Aorta (tissue), 5 donors: ENCODE measurements at regions of chr17 and their contacts with region 1.

Region 1: GRCh38 chr17:38824899-38825761 is at the start of gene CWC25:
- DNase-seq: peak; percentile 94 to 98
- ATAC-seq: peak; percentile 96
- H3K4me3 ChIP-seq: peak within 1 kb of the TSS; percentile 52 to 86
- H3K27ac ChIP-seq: peak within 1 kb of the TSS; percentile 95 to 97
- H3K4me1 ChIP-seq: no peaks in the 10 kb centered on the region
- H3K27me3 ChIP-seq: no peaks in the 10 kb centered on the region
- total RNA-seq, gene CWC25: 19.0 to 23.9 TPM

Region 2: DNA sequence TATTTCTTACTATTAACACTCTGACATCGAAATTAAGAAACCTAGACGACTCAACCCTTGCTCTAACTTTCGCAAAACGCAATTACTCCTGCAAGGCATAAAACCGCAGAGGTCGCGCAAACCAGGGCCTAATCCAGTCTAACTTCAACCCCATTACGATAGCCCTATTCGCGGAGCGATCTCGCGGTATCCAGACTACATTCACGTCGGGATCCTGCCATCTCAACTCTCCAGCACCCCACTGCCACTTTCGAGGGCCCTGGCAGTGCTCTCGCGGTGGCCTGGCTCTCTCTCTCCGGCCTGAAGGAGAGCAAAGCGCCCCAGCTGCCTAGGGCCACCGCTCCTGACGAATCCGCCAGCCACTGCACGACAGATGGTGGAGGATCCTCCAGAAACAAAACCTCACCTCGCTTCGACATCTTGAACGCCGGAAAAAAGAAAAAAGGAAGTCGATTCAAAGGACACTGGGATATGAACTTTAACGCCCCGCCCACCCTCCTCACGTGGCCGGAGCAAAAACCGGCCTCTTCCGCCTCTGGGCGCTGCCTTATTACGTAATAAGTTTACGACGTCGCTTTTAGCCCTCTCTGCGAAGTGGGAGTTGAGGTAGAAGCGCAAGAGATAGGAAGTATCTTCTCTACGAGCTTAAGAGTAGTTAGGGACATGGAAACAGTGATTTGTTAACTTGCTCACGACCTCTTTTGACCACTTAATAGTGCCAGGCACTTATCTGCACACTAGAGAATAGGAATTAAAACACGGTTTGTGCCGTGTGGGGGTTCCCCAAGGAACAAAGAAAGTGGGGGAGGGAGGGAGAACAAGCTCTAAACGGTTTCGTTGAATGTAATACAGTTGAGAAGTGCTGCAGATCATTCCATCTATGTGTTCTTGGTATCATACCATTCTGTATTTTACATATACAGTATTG is 28.4 kb after region 1 on chr17 and contains the start of gene RPL23:
- intact Hi-C with region 1: loop called in 1 of 2 experiments (anchors 1 kb)
- DNase-seq: peak; percentile 96 to 97
- ATAC-seq: peak; percentile 97
- H3K4me3 ChIP-seq: peak within 1 kb of the TSS; percentile 9 to 53
- H3K27ac ChIP-seq: peak within 1 kb of the TSS; percentile 46 to 60
- H3K4me1 ChIP-seq: peaks cover 0 to 5% of the 10 kb centered on the region in 2 donors
- H3K27me3 ChIP-seq: no peaks in the 10 kb centered on the region
- total RNA-seq, gene RPL23: 1,147 to 1,150 TPM

Region 3: DNA sequence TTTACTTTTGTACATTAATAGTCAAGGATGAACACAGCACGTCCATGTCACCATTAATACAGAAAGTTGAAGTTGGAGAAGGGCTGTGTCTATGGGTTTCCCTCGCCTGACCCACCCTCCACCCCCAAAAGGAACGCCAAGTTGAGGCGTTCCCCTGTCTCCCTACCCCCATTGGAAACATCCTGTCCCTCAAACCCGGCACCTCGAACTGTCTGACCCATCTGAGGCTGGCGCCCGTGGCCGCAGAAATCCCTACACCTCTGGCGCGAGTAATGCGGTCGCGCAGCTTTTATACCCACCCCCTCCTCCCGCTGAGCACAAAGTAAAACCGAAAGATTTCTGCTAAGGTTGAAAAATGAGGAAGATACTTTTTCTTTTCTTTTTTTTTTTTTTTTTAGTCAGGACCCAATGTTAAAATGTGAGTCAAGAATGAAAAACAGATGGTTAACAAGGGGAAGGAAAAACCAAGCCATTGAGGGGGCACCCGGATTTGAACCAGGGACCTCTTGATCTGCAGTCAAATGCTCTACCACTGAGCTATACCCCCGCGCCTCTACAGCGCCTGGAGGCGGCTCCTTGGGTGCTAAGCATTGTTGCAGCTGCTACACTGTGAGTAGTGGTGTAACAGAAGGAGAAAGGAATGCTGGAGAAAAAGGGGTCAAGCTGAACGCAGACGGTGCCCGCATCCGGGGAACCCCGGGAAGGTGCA is 43.8 kb after region 1 on chr17:
- intact Hi-C with region 1: loop called in 1 of 2 experiments (anchors 5 kb)
- DNase-seq: peak; percentile 90 to 95
- ATAC-seq: peak; percentile 88
- H3K4me3 ChIP-seq: peak overlapping the region; percentile 61 to 77
- H3K27ac ChIP-seq: peak overlapping the region; percentile 69 to 85
- H3K4me1 ChIP-seq: peaks cover 0 to 5% of the 10 kb centered on the region in 2 donors
- H3K27me3 ChIP-seq: no peaks in the 10 kb centered on the region

Region 4: GRCh38 chr17:39014044-39014794 is 189.1 kb after region 1 on chr17:
- intact Hi-C with region 1: no loop called
- DNase-seq: no peak
- ATAC-seq: no peak
- H3K4me3 ChIP-seq: no peak overlapping the region
- H3K27ac ChIP-seq: no peak overlapping the region
- H3K4me1 ChIP-seq: no peaks in the 10 kb centered on the region
- H3K27me3 ChIP-seq: no peaks in the 10 kb centered on the region